ENCODE measurements at regions of chr6 and their contacts with region 1.

Region 1: DNA sequence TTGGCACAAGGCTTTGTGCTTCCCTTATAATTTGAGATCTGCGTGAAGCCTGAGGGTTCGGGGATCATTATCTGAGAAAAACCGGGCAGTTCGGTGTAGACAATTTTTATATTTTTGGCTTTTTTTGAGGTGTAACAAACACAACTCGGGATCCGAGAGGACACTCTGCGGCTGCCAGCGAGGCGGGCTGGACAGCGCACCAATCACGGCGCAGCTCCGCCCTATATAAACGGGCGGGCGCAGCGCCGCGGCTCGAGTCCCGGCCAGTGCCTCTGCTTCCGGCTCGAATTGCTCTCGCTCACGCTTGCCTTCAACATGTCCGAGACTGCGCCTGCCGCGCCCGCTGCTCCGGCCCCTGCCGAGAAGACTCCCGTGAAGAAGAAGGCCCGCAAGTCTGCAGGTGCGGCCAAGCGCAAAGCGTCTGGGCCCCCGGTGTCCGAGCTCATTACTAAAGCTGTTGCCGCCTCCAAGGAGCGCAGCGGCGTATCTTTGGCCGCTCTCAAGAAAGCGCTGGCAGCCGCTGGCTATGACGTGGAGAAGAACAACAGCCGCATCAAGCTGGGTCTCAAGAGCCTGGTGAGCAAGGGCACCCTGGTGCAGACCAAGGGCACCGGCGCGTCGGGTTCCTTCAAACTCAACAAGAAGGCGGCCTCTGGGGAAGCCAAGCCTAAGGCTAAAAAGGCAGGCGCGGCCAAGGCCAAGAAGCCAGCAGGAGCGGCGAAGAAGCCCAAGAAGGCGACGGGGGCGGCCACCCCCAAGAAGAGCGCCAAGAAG is 69.0 kb downstream of the HFE start:
- DNase-seq: peak; percentile 72 to 94 (median 83)
- H3K4me3 ChIP-seq: peak overlapping the region; percentile 84
- H3K4me3 Mint-ChIP-seq: peak overlapping the region; percentile 87 to 98 (median 94)
- H3K27ac ChIP-seq: peak overlapping the region; percentile 97
- H3K27ac Mint-ChIP-seq: peak overlapping the region; percentile 87 to 99 (median 96)
- H3K4me1 ChIP-seq: peaks cover 20% of the 10 kb centered on the region
- H3K4me1 Mint-ChIP-seq: peaks cover 26 to 47% (median 41%) of the 10 kb centered on the region in 3 donors
- H3K27me3 ChIP-seq: no peaks in the 10 kb centered on the region
- H3K27me3 Mint-ChIP-seq: peaks cover 0 to 1% of the 10 kb centered on the region in 2 donors

Region 2: GRCh38 chr6:26045065-26045927 is 111.0 kb before region 1 on chr6:
- CTCF ChIA-PET with region 1: interaction called, 6 read pairs
- POLR2A ChIA-PET with region 1: interaction called, 82 read pairs
- DNase-seq: peak; percentile 58 to 90 (median 85)
- H3K4me3 ChIP-seq: peak overlapping the region; percentile 77
- H3K4me3 Mint-ChIP-seq: peak overlapping the region; percentile 87 to 94 (median 92)
- H3K27ac ChIP-seq: peak overlapping the region; percentile 71
- H3K27ac Mint-ChIP-seq: peak overlapping the region; percentile 94 to 99 (median 98)
- H3K4me1 ChIP-seq: peaks cover 10% of the 10 kb centered on the region
- H3K4me1 Mint-ChIP-seq: peaks cover 20 to 32% (median 30%) of the 10 kb centered on the region in 3 donors
- H3K27me3 ChIP-seq: no peaks in the 10 kb centered on the region
- H3K27me3 Mint-ChIP-seq: no peaks in the 10 kb centered on the region

Region 3: GRCh38 chr6:26122793-26123674 is 33.2 kb before region 1 on chr6:
- CTCF ChIA-PET with region 1: interaction called, 174 read pairs
- POLR2A ChIA-PET with region 1: interaction called, 958 read pairs
- DNase-seq: peak; percentile 79 to 97 (median 95)
- H3K4me3 ChIP-seq: peak overlapping the region; percentile 90
- H3K4me3 Mint-ChIP-seq: peak overlapping the region; percentile 92 to 100 (median 97)
- H3K27ac ChIP-seq: peak overlapping the region; percentile 97
- H3K27ac Mint-ChIP-seq: peak overlapping the region; percentile 95 to 99 (median 98)
- H3K4me1 ChIP-seq: peaks cover 26% of the 10 kb centered on the region
- H3K4me1 Mint-ChIP-seq: peaks cover 30 to 40% (median 38%) of the 10 kb centered on the region in 3 donors
- H3K27me3 ChIP-seq: no peaks in the 10 kb centered on the region
- H3K27me3 Mint-ChIP-seq: peaks cover 0 to 10% of the 10 kb centered on the region in 2 donors

Region 4: GRCh38 chr6:26204332-26205165 is 48.3 kb after region 1 on chr6:
- CTCF ChIA-PET with region 1: interaction called, 95 read pairs
- POLR2A ChIA-PET with region 1: interaction called, 426 read pairs
- DNase-seq: peak; percentile 75 to 95 (median 87)
- H3K4me3 ChIP-seq: peak overlapping the region; percentile 73
- H3K4me3 Mint-ChIP-seq: no peak overlapping the region
- H3K27ac ChIP-seq: peak overlapping the region; percentile 99
- H3K27ac Mint-ChIP-seq: no peak overlapping the region
- H3K4me1 ChIP-seq: peaks cover 31% of the 10 kb centered on the region
- H3K4me1 Mint-ChIP-seq: peaks cover 18 to 31% (median 20%) of the 10 kb centered on the region in 3 donors
- H3K27me3 ChIP-seq: no peaks in the 10 kb centered on the region
- H3K27me3 Mint-ChIP-seq: peaks cover 0 to 8% of the 10 kb centered on the region in 2 donors

Region 5: GRCh38 chr6:26270903-26271667 is 114.8 kb after region 1 on chr6:
- CTCF ChIA-PET with region 1: interaction called, 5 read pairs
- POLR2A ChIA-PET with region 1: interaction called, 90 read pairs
- DNase-seq: peak; percentile 61 to 84 (median 82)
- H3K4me3 ChIP-seq: peak overlapping the region; percentile 70
- H3K4me3 Mint-ChIP-seq: no peak overlapping the region
- H3K27ac ChIP-seq: peak overlapping the region; percentile 40
- H3K27ac Mint-ChIP-seq: peak overlapping the region in 5 of 8 donors; percentile 16 to 98 (median 41)
- H3K4me1 ChIP-seq: peaks cover 23% of the 10 kb centered on the region
- H3K4me1 Mint-ChIP-seq: peaks cover 19 to 29% (median 22%) of the 10 kb centered on the region in 3 donors
- H3K27me3 ChIP-seq: no peaks in the 10 kb centered on the region
- H3K27me3 Mint-ChIP-seq: peaks cover 0 to 10% of the 10 kb centered on the region in 2 donors

Region 6: GRCh38 chr6:27146706-27147505 is 990.6 kb after region 1 on chr6:
- CTCF ChIA-PET with region 1: no interaction called
- POLR2A ChIA-PET with region 1: interaction called, 30 read pairs
- DNase-seq: peak; percentile 42 to 93 (median 89)
- H3K4me3 ChIP-seq: peak overlapping the region; percentile 97
- H3K4me3 Mint-ChIP-seq: no peak overlapping the region
- H3K27ac ChIP-seq: peak overlapping the region; percentile 91
- H3K27ac Mint-ChIP-seq: no peak overlapping the region
- H3K4me1 ChIP-seq: peaks cover 20% of the 10 kb centered on the region
- H3K4me1 Mint-ChIP-seq: peaks cover 7 to 21% (median 10%) of the 10 kb centered on the region in 3 donors
- H3K27me3 ChIP-seq: no peaks in the 10 kb centered on the region
- H3K27me3 Mint-ChIP-seq: no peaks in the 10 kb centered on the region

Region 7: GRCh38 chr6:27871924-27872638 is 1715.8 kb after region 1 on chr6:
- CTCF ChIA-PET with region 1: no interaction called
- POLR2A ChIA-PET with region 1: interaction called, 20 read pairs
- DNase-seq: peak; percentile 69 to 95 (median 91)
- H3K4me3 ChIP-seq: peak overlapping the region; percentile 71
- H3K4me3 Mint-ChIP-seq: peak overlapping the region; percentile 82 to 95 (median 88)
- H3K27ac ChIP-seq: peak overlapping the region; percentile 71
- H3K27ac Mint-ChIP-seq: peak overlapping the region; percentile 90 to 99 (median 94)
- H3K4me1 ChIP-seq: peaks cover 24% of the 10 kb centered on the region
- H3K4me1 Mint-ChIP-seq: peaks cover 31 to 39% (median 37%) of the 10 kb centered on the region in 3 donors
- H3K27me3 ChIP-seq: no peaks in the 10 kb centered on the region
- H3K27me3 Mint-ChIP-seq: peaks cover 0 to 3% of the 10 kb centered on the region in 2 donors